ENCODE measurements at regions of chr14 and their contacts with region 1.

Region 1: DNA sequence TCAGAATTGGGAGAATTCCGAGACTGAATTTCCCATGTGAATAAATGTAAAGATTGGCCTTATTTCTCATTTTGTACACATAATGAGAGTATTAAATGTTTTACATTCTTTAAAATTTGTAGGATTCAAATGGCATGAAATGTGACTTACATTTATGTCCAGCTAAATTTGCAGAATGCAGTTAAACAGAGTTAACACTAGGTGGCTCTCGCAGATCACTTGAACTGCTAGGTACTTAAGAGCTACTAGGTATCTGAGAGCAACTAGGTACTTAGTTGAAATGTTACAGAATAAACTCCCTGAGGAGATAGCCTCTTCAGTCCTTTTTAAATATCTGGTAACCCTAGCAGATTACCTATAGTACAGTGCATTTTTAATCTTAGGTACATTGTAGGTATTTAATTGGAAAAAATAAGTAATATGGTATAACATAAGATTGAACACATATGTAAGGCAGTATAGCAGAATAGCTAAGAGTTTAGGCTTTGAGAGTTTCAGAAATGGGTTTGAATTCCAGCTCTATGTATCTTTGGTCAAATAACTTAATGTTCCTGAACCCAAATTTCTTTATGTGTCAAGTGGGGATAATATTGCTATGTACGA is 73.8 kb downstream of the KIAA0586 start:
- DNase-seq: peak; percentile 53
- ATAC-seq: peak; percentile 75
- H3K4me3 Mint-ChIP-seq: no peak overlapping the region
- H3K27ac Mint-ChIP-seq: no peak overlapping the region
- H3K4me1 Mint-ChIP-seq: no peaks in the 10 kb centered on the region
- H3K27me3 Mint-ChIP-seq: no peaks in the 10 kb centered on the region

Region 2: GRCh38 chr14:58455587-58456228 is 45.6 kb before region 1 on chr14:
- CTCF ChIA-PET with region 1: no interaction called
- POLR2A ChIA-PET with region 1: no interaction called
- DNase-seq: no peak
- ATAC-seq: no peak
- H3K4me3 Mint-ChIP-seq: no peak overlapping the region
- H3K27ac Mint-ChIP-seq: no peak overlapping the region
- H3K4me1 Mint-ChIP-seq: no peaks in the 10 kb centered on the region
- H3K27me3 Mint-ChIP-seq: no peaks in the 10 kb centered on the region

Region 3: DNA sequence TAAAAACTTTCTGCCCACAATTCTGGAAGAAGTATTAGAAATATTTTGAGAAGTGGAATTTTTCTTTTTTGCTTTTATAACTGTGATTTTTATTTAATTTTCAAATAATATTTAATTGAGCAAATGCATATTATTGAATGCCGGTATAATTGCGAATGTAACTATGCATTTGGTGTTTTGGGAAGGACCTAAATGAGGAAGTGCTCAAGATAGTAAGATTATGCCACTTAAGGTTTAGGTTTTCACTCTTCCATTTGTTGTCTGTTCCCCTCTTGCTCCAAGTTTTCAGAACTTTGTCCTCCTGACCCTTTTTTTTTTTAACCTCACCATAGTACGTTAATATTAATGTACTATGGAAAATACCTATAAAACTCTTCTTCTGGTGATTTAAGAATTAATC is 12.0 kb after region 1 on chr14:
- CTCF ChIA-PET with region 1: interaction called, 15 read pairs
- POLR2A ChIA-PET with region 1: no interaction called
- DNase-seq: no peak
- ATAC-seq: no peak
- H3K4me3 Mint-ChIP-seq: no peak overlapping the region
- H3K27ac Mint-ChIP-seq: no peak overlapping the region
- H3K4me1 Mint-ChIP-seq: no peaks in the 10 kb centered on the region
- H3K27me3 Mint-ChIP-seq: no peaks in the 10 kb centered on the region

Region 4: GRCh38 chr14:58637391-58638230 is 136.3 kb after region 1 on chr14 and contains the start of gene DACT1:
- CTCF ChIA-PET with region 1: interaction called, 39 read pairs
- POLR2A ChIA-PET with region 1: no interaction called
- DNase-seq: peak; percentile 59
- ATAC-seq: peak; percentile 81
- H3K4me3 Mint-ChIP-seq: peak within 1 kb of the TSS; percentile 76
- H3K27ac Mint-ChIP-seq: peak within 1 kb of the TSS; percentile 63
- H3K4me1 Mint-ChIP-seq: peaks cover 24% of the 10 kb centered on the region
- H3K27me3 Mint-ChIP-seq: peaks cover 54% of the 10 kb centered on the region
- total RNA-seq, gene DACT1: 0.58 to 1.1 TPM

Region 5: GRCh38 chr14:59055439-59056045 is 554.2 kb after region 1 on chr14:
- CTCF ChIA-PET with region 1: interaction called, 11 read pairs
- POLR2A ChIA-PET with region 1: no interaction called
- DNase-seq: peak; percentile 37
- ATAC-seq: peak; percentile 68
- H3K4me3 Mint-ChIP-seq: no peak overlapping the region
- H3K27ac Mint-ChIP-seq: no peak overlapping the region
- H3K4me1 Mint-ChIP-seq: no peaks in the 10 kb centered on the region
- H3K27me3 Mint-ChIP-seq: peaks cover 9% of the 10 kb centered on the region